ENCODE measurements at regions of chr11 and their contacts with region 1.

Region 1: GRCh38 chr11:36463781-36464180 is 46.3 kb downstream of the TRAF6 start:
- DNase-seq: no peak
- H3K27ac ChIP-seq: no peak overlapping the region
- CTCF ChIP-seq: no peak

Region 2: GRCh38 chr11:34667810-34668582 is 1795.8 kb before region 1 on chr11:
- CTCF ChIA-PET with region 1: interaction called, 13 read pairs
- POLR2A ChIA-PET with region 1: no interaction called
- DNase-seq: no peak
- H3K27ac ChIP-seq: no peak overlapping the region
- CTCF ChIP-seq: no peak

Region 3: GRCh38 chr11:36385121-36385970 is 78.4 kb before region 1 on chr11:
- CTCF ChIA-PET with region 1: no interaction called
- POLR2A ChIA-PET with region 1: no interaction called
- DNase-seq: no peak
- H3K27ac ChIP-seq: no peak overlapping the region
- CTCF ChIP-seq: no peak

Measured in RWPE1 (cell line).